PC-9 (cell line): ENCODE measurements at regions of chr3 and their contacts with region 1.

Region 1: DNA sequence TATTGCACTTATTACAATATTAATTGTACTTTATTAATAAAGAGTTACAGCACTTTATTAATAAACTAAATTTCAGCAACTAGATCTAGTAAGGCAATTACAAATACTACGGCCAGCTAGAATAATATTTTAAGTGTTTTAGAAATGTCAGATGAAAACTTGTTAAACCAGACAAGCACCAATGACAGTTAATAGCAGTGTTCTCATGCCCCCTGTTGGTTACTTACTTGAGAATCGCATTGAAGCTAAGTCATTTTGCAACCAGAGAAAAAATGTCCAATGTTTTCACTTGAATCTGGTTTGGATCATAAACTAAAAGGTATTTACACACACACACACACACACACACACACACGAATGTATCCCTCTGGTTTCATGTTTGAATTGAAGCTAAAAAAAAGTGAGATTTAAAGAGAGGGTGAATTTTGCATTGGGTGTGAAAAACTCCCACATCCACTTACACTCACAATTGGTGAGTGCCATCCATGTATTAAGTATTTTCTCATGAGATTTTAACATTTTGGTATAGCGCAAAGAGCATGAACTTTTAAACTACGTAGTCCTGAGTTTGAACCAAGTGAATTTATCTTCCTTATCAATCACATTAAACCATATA is 347.7 kb downstream of the ZBBX start:
- DNase-seq: peak; percentile 31 to 52
- H3K4me3 ChIP-seq: no peak overlapping the region
- H3K27ac ChIP-seq: no peak overlapping the region
- H3K4me1 ChIP-seq: no peaks in the 10 kb centered on the region
- H3K27me3 ChIP-seq: no peaks in the 10 kb centered on the region
- CTCF ChIP-seq: peak; percentile 82

Region 2: GRCh38 chr3:165254812-165255211 is 1777.6 kb before region 1 on chr3:
- CTCF ChIA-PET with region 1: interaction called, 7 read pairs
- POLR2A ChIA-PET with region 1: no interaction called
- intact Hi-C with region 1: loop called (anchors 2 kb)
- DNase-seq: peak; percentile 11 to 37
- H3K4me3 ChIP-seq: no peak overlapping the region
- H3K27ac ChIP-seq: no peak overlapping the region
- H3K4me1 ChIP-seq: 0 out of 2 replicates have a peak, but pooled peaks cover 7% of the 10 kb centered on the region
- H3K27me3 ChIP-seq: no peaks in the 10 kb centered on the region
- CTCF ChIP-seq: peak; percentile 48; the same call in 1 of the 2 replicates

Region 3: DNA sequence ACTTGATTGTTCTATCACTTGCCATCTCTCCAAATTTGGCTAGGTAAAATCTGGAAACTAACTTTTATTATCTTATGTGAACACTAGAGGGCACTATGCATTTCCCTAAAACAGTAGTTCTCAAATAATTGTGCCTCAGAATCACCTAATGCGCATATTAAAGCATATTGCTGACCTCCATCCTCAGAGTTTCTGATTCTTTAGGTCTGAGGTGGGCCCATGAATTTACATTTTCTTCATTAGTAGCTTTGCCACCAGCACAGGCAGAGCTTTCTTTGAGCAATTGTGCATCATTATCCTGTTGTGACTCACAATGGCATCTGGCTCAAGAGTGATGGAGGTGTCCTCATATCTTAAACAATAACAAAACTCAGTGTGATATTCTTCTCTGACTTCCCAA is 1177.7 kb before region 1 on chr3:
- CTCF ChIA-PET with region 1: no interaction called
- POLR2A ChIA-PET with region 1: no interaction called
- intact Hi-C with region 1: loop called (anchors 1 kb)
- DNase-seq: peak; percentile 3 to 42
- H3K4me3 ChIP-seq: no peak overlapping the region
- H3K27ac ChIP-seq: no peak overlapping the region
- H3K4me1 ChIP-seq: no peaks in the 10 kb centered on the region
- H3K27me3 ChIP-seq: no peaks in the 10 kb centered on the region
- CTCF ChIP-seq: peak; percentile 86

Region 4: GRCh38 chr3:166837535-166837934 is 194.8 kb before region 1 on chr3:
- CTCF ChIA-PET with region 1: interaction called, 5 read pairs
- POLR2A ChIA-PET with region 1: no interaction called
- intact Hi-C with region 1: loop called (anchors 10 kb)
- DNase-seq: no peak
- H3K4me3 ChIP-seq: no peak overlapping the region
- H3K27ac ChIP-seq: no peak overlapping the region
- H3K4me1 ChIP-seq: 0 out of 2 replicates have a peak, but pooled peaks cover 8% of the 10 kb centered on the region
- H3K27me3 ChIP-seq: no peaks in the 10 kb centered on the region
- CTCF ChIP-seq: peak; percentile 58

Region 5: GRCh38 chr3:166993015-166993630 is 39.2 kb before region 1 on chr3:
- CTCF ChIA-PET with region 1: no interaction called
- POLR2A ChIA-PET with region 1: no interaction called
- intact Hi-C with region 1: no loop called
- DNase-seq: no peak
- H3K4me3 ChIP-seq: no peak overlapping the region
- H3K27ac ChIP-seq: no peak overlapping the region
- H3K4me1 ChIP-seq: no peaks in the 10 kb centered on the region
- H3K27me3 ChIP-seq: no peaks in the 10 kb centered on the region
- CTCF ChIP-seq: no peak

Region 6: GRCh38 chr3:167198949-167199600 is 166.7 kb after region 1 on chr3:
- CTCF ChIA-PET with region 1: no interaction called
- POLR2A ChIA-PET with region 1: no interaction called
- intact Hi-C with region 1: no loop called
- DNase-seq: no peak
- H3K4me3 ChIP-seq: no peak overlapping the region
- H3K27ac ChIP-seq: no peak overlapping the region
- H3K4me1 ChIP-seq: no peaks in the 10 kb centered on the region
- H3K27me3 ChIP-seq: no peaks in the 10 kb centered on the region
- CTCF ChIP-seq: no peak

Region 7: GRCh38 chr3:167350245-167350862 is 318.0 kb after region 1 on chr3:
- CTCF ChIA-PET with region 1: no interaction called
- POLR2A ChIA-PET with region 1: no interaction called
- intact Hi-C with region 1: loop called (anchors 5 kb)
- DNase-seq: peak in 1 of 2 experiments; percentile 18
- H3K4me3 ChIP-seq: no peak overlapping the region
- H3K27ac ChIP-seq: no peak overlapping the region
- H3K4me1 ChIP-seq: no peaks in the 10 kb centered on the region
- H3K27me3 ChIP-seq: no peaks in the 10 kb centered on the region
- CTCF ChIP-seq: peak; percentile 66